ENCODE measurements at regions of chr19 and their contacts with region 1.

Region 1: GRCh38 chr19:57769345-57770131 is at the start of gene ZNF586:
- H3K4me3 Mint-ChIP-seq: peak within 1 kb of the TSS; percentile 90
- H3K27ac Mint-ChIP-seq: peak within 1 kb of the TSS; percentile 88
- H3K4me1 Mint-ChIP-seq: peaks cover 24% of the 10 kb centered on the region
- H3K27me3 Mint-ChIP-seq: no peaks in the 10 kb centered on the region

Region 2: DNA sequence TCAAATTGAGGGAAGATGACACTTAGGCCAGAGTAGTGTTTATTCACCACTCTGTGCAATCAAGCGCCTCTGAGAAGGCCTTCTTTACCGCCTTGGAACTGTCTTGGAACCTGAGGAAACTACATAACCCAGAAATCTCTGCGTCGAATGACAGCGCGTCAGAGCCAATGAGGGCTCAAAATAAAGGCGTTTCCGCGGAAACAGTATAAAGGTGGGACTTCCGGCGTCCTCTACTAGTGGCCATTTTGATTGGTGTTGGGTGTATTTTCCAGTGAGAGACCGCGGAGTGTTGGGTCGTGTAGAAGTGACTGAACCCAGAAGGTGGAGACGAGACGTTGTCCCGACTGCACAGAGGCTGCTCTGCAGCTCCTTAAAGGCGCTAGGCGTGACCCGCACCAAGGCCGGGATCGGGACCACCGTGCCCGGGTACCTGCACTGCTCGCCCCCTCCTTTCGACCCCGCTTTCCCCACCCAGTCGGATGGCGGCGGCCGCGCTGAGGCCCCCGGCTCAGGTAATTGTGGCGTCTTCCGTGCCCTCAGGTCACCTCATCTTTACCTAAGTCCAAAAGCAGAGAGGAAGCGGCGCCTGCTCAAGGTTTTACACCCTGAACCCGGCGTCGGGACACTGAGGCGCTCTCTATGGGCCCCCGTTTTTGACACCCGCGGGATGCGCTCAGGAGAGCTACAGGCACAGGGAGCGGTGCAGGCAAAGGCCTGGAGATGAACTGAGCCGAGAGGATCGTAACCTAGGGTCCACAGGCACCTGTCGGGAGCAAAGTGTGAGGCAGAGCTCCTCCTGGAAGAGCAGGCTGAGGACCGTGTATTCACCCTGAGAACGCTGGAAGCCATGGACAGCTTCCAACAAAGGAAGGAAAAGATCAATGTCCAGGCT is 22.7 kb before region 1 on chr19 and contains the start of gene ZNF776:
- intact Hi-C with region 1: loop called (anchors 1 kb)
- H3K4me3 Mint-ChIP-seq: peak within 1 kb of the TSS; percentile 97
- H3K27ac Mint-ChIP-seq: peak within 1 kb of the TSS; percentile 96
- H3K4me1 Mint-ChIP-seq: peaks cover 13% of the 10 kb centered on the region
- H3K27me3 Mint-ChIP-seq: peaks cover 3% of the 10 kb centered on the region

Region 3: GRCh38 chr19:57841122-57841763 is 71.7 kb after region 1 on chr19:
- intact Hi-C with region 1: no loop called
- H3K4me3 Mint-ChIP-seq: no peak overlapping the region
- H3K27ac Mint-ChIP-seq: no peak overlapping the region
- H3K4me1 Mint-ChIP-seq: peaks cover 10% of the 10 kb centered on the region
- H3K27me3 Mint-ChIP-seq: no peaks in the 10 kb centered on the region